Activated naive CD4-positive, alpha-beta T cell treated with anti-CD3 and anti-CD28 coated beads, Interleukin-2, amount 10 ng/mL, durations not matched to agents 7 days and 5 days (primary cell): ENCODE measurements at regions of chr11 and their contacts with region 1.

Region 1: DNA sequence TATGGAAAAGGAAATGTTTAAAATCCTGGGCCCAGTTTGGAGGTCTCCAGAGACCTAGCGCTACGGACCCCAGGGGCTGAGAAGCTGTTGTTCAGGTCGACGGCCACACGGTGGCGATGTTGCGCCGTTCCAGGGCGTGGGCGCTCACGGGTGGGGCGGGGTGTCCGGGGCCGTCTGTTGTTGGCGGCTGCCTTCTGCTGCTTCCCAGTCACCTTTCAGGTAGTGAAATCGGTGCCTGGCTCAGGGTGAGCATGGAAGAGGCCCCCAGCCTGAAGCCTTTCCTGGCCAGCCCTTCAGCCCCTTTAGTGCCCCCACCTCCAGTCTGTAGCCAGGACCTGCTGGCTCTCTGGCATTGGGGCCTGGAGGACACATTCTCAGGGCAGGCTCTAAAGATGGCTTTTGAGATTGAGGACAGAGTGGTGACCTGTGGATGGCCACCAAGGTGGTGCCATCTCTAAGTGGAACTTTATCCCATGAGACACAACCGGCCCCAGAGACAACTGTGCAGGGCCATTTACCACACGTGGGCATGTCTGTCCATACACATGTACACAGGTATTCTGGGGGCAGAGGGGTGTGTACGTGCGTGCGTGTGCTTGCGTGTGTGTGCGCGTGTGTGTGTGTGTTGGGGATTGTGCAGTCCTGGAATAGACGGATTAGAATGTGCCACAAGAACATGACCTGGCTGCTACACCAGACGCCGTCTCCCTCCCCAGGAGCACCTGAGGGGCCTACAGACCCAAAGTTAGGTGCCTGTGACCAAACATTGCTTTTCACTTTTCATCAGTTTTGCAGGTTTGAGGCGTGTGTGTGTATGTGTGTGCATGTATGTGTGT is 53.8 kb downstream of the ST14 start:
- DNase-seq: peak; percentile 75
- H3K4me3 Mint-ChIP-seq: no peak overlapping the region
- H3K27ac Mint-ChIP-seq: no peak overlapping the region
- H3K4me1 Mint-ChIP-seq: peaks cover 2% of the 10 kb centered on the region
- H3K27me3 Mint-ChIP-seq: peaks cover 26% of the 10 kb centered on the region

Region 2: DNA sequence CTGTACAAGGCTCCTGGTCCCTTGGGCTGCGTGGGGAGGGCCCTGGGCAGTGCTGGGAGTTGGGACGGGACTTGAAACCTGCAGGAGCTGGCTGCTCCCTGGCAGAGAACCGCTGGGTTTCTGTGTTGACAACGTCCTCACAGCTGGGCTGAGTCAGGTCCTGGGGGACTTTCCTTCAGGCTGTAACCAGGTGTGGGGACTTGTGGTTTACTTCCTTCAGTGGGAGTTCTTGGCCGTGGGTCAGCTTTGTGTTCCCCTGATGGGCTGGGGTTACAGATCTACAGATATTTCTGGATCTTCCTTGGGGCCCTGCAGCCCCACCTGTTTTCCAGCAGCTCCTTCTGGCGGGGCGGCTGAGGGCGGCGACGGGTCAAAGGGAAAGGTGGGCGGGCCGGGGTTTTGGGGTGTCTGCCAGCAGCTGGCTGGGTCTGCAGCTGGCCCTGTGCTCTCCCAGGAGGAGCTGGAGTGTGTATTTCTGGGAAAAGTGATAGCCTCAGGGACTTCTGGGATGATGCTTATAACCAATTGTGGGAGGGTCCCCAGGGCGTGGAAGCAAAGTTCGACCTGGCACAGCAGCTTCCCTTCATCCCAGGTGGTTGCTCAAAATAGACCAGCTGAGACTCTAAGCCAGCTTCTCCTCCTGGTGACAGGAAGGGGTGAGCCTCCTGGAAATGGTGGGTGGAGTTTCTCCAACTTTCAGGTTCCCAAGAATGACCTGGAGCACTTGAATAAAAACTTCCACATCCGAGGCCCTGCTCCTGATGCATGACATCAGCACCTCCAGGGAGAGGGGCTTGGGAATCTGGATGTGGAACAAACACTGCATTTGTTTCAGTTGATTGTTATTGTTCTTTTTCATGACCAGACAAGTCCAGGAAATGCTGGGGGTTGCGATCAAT is 34.7 kb before region 1 on chr11:
- CTCF ChIA-PET with region 1: no interaction called
- DNase-seq: no peak
- H3K4me3 Mint-ChIP-seq: no peak overlapping the region
- H3K27ac Mint-ChIP-seq: no peak overlapping the region
- H3K4me1 Mint-ChIP-seq: no peaks in the 10 kb centered on the region
- H3K27me3 Mint-ChIP-seq: peaks cover 8% of the 10 kb centered on the region

Region 3: DNA sequence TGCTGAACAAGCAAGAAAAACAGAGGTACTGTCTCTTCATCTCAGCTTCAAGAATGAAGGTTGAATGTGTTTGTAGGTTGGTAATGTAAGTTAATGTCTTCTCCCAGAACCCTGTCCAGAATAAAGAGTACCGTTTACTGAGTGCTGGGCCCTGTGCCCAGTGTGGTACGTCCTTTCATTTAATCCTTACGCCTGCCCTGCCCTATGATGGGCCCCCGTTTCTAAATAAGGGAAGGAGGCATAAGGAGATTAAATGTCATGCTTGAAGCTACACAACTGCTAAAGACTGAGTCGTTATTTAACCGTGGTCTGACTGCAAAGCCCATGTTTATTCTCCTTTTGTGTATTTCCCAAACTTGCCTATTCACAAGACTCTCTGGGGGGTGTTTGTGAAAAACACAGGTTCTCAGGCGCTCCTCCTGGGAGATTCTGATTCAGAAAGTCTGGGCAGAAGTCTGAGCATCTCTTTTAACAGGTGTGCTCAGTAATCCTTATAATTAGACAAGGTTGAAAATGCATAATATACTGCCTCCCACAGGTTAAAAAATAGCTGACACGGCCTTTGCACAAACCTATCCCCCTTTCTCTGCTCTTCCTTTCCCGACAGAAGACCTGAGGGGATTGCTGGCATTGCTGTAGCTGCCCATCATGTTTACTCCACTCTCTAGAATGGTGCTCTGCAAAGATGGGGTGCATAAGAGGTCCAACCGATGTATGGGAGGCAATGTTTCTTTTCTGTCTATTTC is 157.7 kb after region 1 on chr11:
- CTCF ChIA-PET with region 1: interaction called, 17 read pairs
- DNase-seq: no peak
- H3K4me3 Mint-ChIP-seq: no peak overlapping the region
- H3K27ac Mint-ChIP-seq: no peak overlapping the region
- H3K4me1 Mint-ChIP-seq: no peaks in the 10 kb centered on the region
- H3K27me3 Mint-ChIP-seq: no peaks in the 10 kb centered on the region